ENCODE measurements at regions of chr5 and their contacts with region 1.

Region 1: GRCh38 chr5:150778517-150779396 is at the start of gene SMIM3:
- DNase-seq: peak; percentile 84
- H3K4me3 Mint-ChIP-seq: peak within 1 kb of the TSS; percentile 99
- H3K27ac Mint-ChIP-seq: peak within 1 kb of the TSS; percentile 91
- H3K4me1 Mint-ChIP-seq: peaks cover 47% of the 10 kb centered on the region
- H3K27me3 Mint-ChIP-seq: no peaks in the 10 kb centered on the region
- CTCF ChIP-seq: peak; percentile 54
- total RNA-seq, gene SMIM3: 21.7 and 26.1 TPM in 2 replicates

Region 2: DNA sequence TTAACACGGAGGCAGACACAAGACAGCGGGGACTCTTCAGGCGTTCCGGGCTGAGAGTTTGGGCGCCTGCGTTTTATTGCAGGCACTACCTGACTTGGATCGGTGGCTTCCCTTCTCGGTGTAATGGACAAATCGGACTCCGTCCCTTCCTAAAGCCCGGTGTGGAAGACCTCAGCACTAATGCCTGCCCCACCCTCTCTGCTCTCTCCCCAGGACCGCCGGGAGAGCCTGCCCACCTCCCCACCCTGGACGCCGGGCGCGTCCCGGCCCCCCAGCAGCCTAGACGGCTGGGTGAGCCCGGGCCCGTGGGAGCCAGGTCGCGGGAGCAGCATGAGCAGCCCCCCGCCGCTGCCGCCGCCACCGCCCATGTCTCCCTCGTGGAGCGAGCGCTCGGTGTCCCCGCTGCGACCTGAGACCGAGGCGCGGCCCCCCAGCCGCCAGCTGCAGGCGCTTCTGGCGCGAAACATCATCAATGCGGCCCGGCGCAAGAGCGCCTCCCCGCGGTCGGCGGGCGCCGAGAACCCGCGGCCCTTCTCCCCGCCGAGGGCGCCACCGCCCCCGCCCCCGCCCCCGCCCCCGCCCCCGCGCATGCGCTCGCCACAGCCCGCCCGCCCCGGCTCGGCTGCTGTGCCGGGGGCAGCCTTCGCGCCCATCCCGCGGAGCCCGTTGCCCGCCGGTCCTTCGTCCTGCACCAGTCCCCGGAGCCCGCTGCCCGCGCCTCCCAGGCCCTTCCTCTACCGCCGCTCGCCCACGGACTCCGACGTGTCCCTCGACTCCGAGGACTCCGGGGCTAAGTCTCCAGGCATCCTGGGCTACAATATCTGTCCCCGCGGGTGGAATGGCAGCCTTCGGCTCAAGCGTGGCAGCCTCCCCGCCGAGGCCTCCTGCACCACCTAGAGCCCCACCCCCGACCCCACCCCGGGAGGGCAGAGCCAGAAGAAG is 122.3 kb before region 1 on chr5:
- CTCF ChIA-PET with region 1: interaction called, 19 read pairs
- POLR2A ChIA-PET with region 1: interaction called, 4 read pairs
- intact Hi-C with region 1: no loop called
- DNase-seq: peak; percentile 58
- H3K4me3 Mint-ChIP-seq: peak overlapping the region; percentile 71
- H3K27ac Mint-ChIP-seq: no peak overlapping the region
- H3K4me1 Mint-ChIP-seq: peaks cover 14% of the 10 kb centered on the region
- H3K27me3 Mint-ChIP-seq: peaks cover 11% of the 10 kb centered on the region
- CTCF ChIP-seq: peak; percentile 99

Region 3: DNA sequence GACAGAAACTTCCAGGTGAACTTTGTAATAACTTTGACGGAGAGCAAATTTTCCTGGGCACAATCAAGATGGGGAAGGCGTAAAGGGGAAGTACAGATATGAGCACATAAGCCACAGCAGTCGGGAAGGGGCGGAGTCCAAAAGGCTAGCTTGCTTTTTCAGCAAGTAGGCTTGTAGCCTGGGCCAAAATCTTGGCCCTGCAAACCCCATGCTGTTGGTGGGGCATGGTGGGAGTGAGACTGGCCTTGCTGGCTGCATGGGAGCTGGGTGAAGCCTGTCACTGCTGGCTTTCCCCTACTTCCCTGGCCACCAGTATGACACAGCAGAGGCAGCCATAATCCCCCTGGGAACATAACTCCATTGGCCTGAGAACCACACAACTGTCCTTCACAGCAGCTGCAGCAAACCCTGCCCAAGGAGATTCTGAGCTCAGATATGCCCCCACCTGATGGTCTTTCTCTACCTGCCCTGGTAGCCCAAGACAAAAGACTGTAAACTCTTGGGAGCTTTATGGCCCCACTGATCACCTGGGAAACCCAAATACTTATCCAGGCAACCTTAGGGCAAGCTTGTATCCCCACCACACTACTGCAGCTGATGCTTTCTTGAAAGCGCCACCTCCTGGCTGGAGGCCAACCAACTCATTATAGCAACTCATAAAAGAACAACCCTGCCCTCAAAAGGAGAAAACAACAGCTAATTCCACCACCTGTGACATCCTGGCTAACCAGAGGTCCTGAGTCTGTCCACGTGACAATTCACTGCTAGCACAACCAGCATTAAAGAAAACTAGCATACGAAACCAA is 44.0 kb before region 1 on chr5:
- CTCF ChIA-PET with region 1: interaction called, 19 read pairs
- POLR2A ChIA-PET with region 1: interaction called, 4 read pairs
- intact Hi-C with region 1: no loop called
- DNase-seq: peak; percentile 22
- H3K4me3 Mint-ChIP-seq: no peak overlapping the region
- H3K27ac Mint-ChIP-seq: no peak overlapping the region
- H3K4me1 Mint-ChIP-seq: peaks cover 22% of the 10 kb centered on the region
- H3K27me3 Mint-ChIP-seq: no peaks in the 10 kb centered on the region
- CTCF ChIP-seq: no peak

Region 4: GRCh38 chr5:150789943-150790611 is 11.3 kb after region 1 on chr5:
- CTCF ChIA-PET with region 1: interaction called, 54 read pairs
- POLR2A ChIA-PET with region 1: interaction called, 122 read pairs
- intact Hi-C with region 1: no loop called
- DNase-seq: peak; percentile 100
- H3K4me3 Mint-ChIP-seq: peak overlapping the region; percentile 65
- H3K27ac Mint-ChIP-seq: peak overlapping the region; percentile 95
- H3K4me1 Mint-ChIP-seq: peaks cover 48% of the 10 kb centered on the region
- H3K27me3 Mint-ChIP-seq: no peaks in the 10 kb centered on the region
- CTCF ChIP-seq: no peak

Region 5: GRCh38 chr5:150846654-150847333 is 68.0 kb after region 1 on chr5:
- CTCF ChIA-PET with region 1: interaction called, 31 read pairs
- POLR2A ChIA-PET with region 1: interaction called, 5 read pairs
- intact Hi-C with region 1: no loop called
- DNase-seq: peak; percentile 92
- H3K4me3 Mint-ChIP-seq: no peak overlapping the region
- H3K27ac Mint-ChIP-seq: no peak overlapping the region
- H3K4me1 Mint-ChIP-seq: no peaks in the 10 kb centered on the region
- H3K27me3 Mint-ChIP-seq: no peaks in the 10 kb centered on the region
- CTCF ChIP-seq: peak; percentile 85

Region 6: GRCh38 chr5:150946351-150946905 is 167.7 kb after region 1 on chr5:
- CTCF ChIA-PET with region 1: no interaction called
- POLR2A ChIA-PET with region 1: no interaction called
- intact Hi-C with region 1: no loop called
- DNase-seq: no peak
- H3K4me3 Mint-ChIP-seq: no peak overlapping the region
- H3K27ac Mint-ChIP-seq: no peak overlapping the region
- H3K4me1 Mint-ChIP-seq: no peaks in the 10 kb centered on the region
- H3K27me3 Mint-ChIP-seq: no peaks in the 10 kb centered on the region
- CTCF ChIP-seq: no peak